GM12878 (cell line): ENCODE measurements at regions of chr9 and their contacts with region 1.

Region 1: GRCh38 chr9:99104459-99105151 is at the start of gene TGFBR1:
- DNase-seq: peak; percentile 53
- ATAC-seq: peak; percentile 89
- H3K4me3 ChIP-seq: peak within 1 kb of the TSS; percentile 87
- H3K27ac ChIP-seq: peak within 1 kb of the TSS; percentile 67
- H3K4me1 ChIP-seq: peaks cover 8% of the 10 kb centered on the region; the same call in 1 of the 2 replicates
- H3K27me3 ChIP-seq: no peaks in the 10 kb centered on the region
- CTCF ChIP-seq: peak in 1 of 3 experiments; percentile 21; a peak in 1 of 6 replicates
- EP300 ChIP-seq: no peak
- POLR2A ChIP-seq: no peak
- RAD21 ChIP-seq: no peak
- polyA plus RNA-seq, gene TGFBR1: 5.7 to 19.6 TPM

Region 2: GRCh38 chr9:98906262-98907040 is 198.2 kb before region 1 on chr9:
- CTCF ChIA-PET with region 1: no interaction called
- POLR2A ChIA-PET with region 1: no interaction called
- RAD21 ChIA-PET with region 1: no interaction called
- SMC1A ChIA-PET with region 1: no interaction called
- in situ Hi-C with region 1: no loop called
- intact Hi-C with region 1: no loop called
- DNase-seq: no peak
- ATAC-seq: no peak
- H3K4me3 ChIP-seq: no peak overlapping the region
- H3K27ac ChIP-seq: no peak overlapping the region
- H3K4me1 ChIP-seq: no peaks in the 10 kb centered on the region
- H3K27me3 ChIP-seq: no peaks in the 10 kb centered on the region
- CTCF ChIP-seq: no peak
- EP300 ChIP-seq: no peak
- POLR2A ChIP-seq: no peak
- RAD21 ChIP-seq: no peak

Region 3: DNA sequence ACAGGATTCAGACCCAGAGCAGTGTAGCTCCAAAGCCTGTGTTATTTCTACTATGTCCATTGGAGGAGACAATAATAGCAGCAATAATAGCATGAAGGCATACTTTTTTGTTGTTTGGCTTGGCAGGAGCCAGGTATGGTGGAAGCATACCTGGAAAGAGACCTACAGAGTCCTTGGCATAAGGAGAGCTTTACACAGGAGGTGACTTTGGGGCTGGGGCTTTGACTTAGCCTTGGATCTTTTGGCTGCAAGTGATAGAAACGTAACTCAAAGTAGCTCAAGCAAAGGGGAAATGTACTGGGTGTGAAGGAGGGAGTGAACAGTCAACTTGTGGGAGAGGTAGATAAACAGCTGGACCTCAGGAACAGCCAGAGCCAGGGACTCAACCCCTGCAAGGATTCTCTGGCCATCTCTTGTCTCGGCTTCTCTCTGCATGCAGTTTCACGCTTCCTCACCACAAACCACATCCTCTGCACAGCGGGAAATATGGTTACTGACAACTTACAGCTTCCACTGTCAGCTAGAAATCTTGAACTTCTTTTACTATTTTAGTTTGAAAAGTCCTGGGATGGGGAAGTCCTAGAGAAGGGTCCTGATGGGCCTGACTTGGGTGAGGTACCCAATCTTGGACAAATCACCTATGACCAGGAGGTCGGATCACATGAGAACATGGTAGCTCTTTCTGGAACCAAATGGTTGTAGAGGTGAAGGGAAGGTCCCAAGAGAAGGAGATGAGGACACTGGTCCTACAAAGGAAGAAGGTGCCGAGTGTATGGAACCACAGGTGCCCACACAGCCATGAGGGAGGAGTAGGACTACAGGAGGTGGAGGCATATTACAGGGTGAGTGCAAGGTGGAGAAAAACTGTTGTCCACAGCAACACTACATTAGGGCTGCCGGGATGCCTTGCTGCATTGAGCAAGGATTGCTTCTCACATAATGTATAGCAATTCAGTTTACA is 46.7 kb before region 1 on chr9:
- CTCF ChIA-PET with region 1: no interaction called
- POLR2A ChIA-PET with region 1: interaction called, 8 read pairs
- RAD21 ChIA-PET with region 1: interaction called, 17 read pairs
- SMC1A ChIA-PET with region 1: interaction called, 8 read pairs
- in situ Hi-C with region 1: no loop called
- intact Hi-C with region 1: loop called (anchors 5 kb)
- DNase-seq: peak; percentile 64
- ATAC-seq: peak; percentile 88
- H3K4me3 ChIP-seq: peak overlapping the region; percentile 25; the same call in 1 of the 2 replicates
- H3K27ac ChIP-seq: peak overlapping the region; percentile 15; the same call in 1 of the 2 replicates
- H3K4me1 ChIP-seq: peaks cover 27% of the 10 kb centered on the region
- H3K27me3 ChIP-seq: no peaks in the 10 kb centered on the region
- CTCF ChIP-seq: no peak
- EP300 ChIP-seq: no peak
- POLR2A ChIP-seq: no peak
- RAD21 ChIP-seq: no peak

Region 4: GRCh38 chr9:99118782-99119466 is 14.3 kb after region 1 on chr9:
- CTCF ChIA-PET with region 1: interaction called, 13 read pairs
- POLR2A ChIA-PET with region 1: interaction called, 20 read pairs
- RAD21 ChIA-PET with region 1: interaction called, 6 read pairs
- SMC1A ChIA-PET with region 1: interaction called, 11 read pairs
- in situ Hi-C with region 1: no loop called
- intact Hi-C with region 1: no loop called
- DNase-seq: peak; percentile 76
- ATAC-seq: peak; percentile 95
- H3K4me3 ChIP-seq: peak overlapping the region; percentile 15; the same call in 1 of the 2 replicates
- H3K27ac ChIP-seq: peak overlapping the region; percentile 68
- H3K4me1 ChIP-seq: peaks cover 19% of the 10 kb centered on the region
- H3K27me3 ChIP-seq: no peaks in the 10 kb centered on the region
- CTCF ChIP-seq: no peak
- EP300 ChIP-seq: peak; percentile 75 to 93; a peak in 3 of 4 replicates
- POLR2A ChIP-seq: no peak
- RAD21 ChIP-seq: no peak